ENCODE measurements at regions of chr10 and their contacts with region 1.

Region 1: GRCh38 chr10:61835069-61835945 is 66.2 kb upstream of the ARID5B start:
- DNase-seq: no peak
- ATAC-seq: no peak
- H3K4me3 Mint-ChIP-seq: no peak overlapping the region
- H3K27ac Mint-ChIP-seq: no peak overlapping the region
- H3K4me1 Mint-ChIP-seq: peaks cover 4% of the 10 kb centered on the region
- H3K27me3 Mint-ChIP-seq: no peaks in the 10 kb centered on the region

Region 2: DNA sequence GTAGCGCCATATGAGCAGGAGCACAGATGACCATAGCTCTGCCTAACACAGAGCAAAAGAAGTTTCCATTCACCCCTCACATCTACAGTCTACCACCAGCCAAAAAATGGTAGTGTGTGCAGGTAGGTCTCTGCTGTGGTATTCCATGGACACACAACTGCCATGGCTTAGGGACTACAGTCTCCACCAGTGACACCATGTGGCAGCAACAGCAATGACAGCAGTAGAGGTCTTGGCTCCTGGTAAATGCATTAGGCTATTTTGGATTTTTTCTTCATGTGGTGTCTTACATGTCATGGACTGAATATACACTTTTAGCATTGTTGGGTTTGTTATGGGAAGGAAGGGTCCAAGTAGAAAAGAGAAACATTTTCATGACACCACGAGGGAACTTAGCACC is 242.7 kb before region 1 on chr10:
- CTCF ChIA-PET with region 1: no interaction called
- POLR2A ChIA-PET with region 1: no interaction called
- DNase-seq: no peak
- ATAC-seq: no peak
- H3K4me3 Mint-ChIP-seq: no peak overlapping the region
- H3K27ac Mint-ChIP-seq: no peak overlapping the region
- H3K4me1 Mint-ChIP-seq: no peaks in the 10 kb centered on the region
- H3K27me3 Mint-ChIP-seq: no peaks in the 10 kb centered on the region

Region 3: DNA sequence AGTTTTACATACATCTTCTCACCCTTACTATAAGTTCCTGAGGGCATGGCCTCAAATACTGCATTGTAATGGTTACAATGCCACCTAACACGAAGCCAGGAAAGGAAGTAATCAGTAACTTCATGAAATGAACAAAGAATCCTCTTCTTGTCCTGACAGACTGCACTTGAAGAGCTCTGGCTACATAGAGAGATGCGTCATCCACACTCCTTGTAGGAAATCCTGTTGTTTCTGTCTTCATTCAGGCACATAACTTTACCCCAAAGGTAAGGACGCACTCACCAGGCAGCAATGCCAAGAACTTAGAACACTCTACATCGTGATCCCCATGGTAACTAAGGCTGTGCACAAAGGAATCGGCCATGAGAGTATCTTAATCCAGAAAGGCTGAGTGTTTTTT is 14.2 kb before region 1 on chr10:
- CTCF ChIA-PET with region 1: interaction called, 10 read pairs
- POLR2A ChIA-PET with region 1: interaction called, 3 read pairs
- DNase-seq: no peak
- ATAC-seq: no peak
- H3K4me3 Mint-ChIP-seq: no peak overlapping the region
- H3K27ac Mint-ChIP-seq: no peak overlapping the region
- H3K4me1 Mint-ChIP-seq: peaks cover 3% of the 10 kb centered on the region
- H3K27me3 Mint-ChIP-seq: no peaks in the 10 kb centered on the region